ENCODE measurements at regions of chr11 and their contacts with region 1.

Region 1: GRCh38 chr11:126140932-126141291 is 70.5 kb downstream of the RPUSD4 start:
- DNase-seq: peak; percentile 85

Region 2: DNA sequence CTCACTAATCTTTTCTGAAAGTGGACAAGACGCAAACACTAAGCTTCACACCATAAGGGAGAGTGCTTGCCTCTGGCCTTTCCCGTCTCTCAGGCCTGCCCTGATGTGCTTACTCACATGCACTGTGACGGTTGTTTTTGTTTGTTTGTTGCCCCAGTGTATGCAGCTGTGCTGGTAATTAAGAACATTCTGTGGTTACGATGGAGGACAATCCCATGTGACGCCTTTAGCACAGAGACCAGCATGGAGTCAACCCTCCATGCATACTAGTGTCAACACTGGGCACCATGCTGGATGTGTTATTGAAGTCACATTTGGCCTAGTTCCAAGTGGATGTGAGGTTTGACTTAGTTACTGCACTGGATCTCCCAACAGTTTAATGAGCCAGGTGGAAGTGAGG is 50.5 kb before region 1 on chr11:
- intact Hi-C with region 1: loop called in 1 of 2 experiments (anchors 10 kb)
- DNase-seq: no peak

Region 3: GRCh38 chr11:126115816-126116331 is 25.0 kb before region 1 on chr11:
- intact Hi-C with region 1: loop called in 1 of 2 experiments (anchors 2 kb)
- DNase-seq: peak; percentile 90

Measured in posterior vena cava (tissue), 2 donors.